Activated T-helper 1 cell treated with anti-CD3 and anti-CD28 coated beads, Interleukin-12 subunit alpha, Interleukin-12 subunit beta, Interleukin-2, Interleukin-4 antibody, amounts not matched to agents 30 ng/mL and 10 ng/mL and 1 ng/mL, durations not matched to agents 14 hours and 24 hours and 36 hours (primary cell): ENCODE measurements at regions of chr12 and their contacts with region 1.

Region 1: GRCh38 chr12:100554608-100555077 is 18.8 kb upstream of the GAS2L3 start:
- DNase-seq: no peak
- H3K4me3 Mint-ChIP-seq: no peak overlapping the region
- H3K27ac Mint-ChIP-seq: no peak overlapping the region
- H3K4me1 Mint-ChIP-seq: no peaks in the 10 kb centered on the region
- H3K27me3 Mint-ChIP-seq: peaks cover 5% of the 10 kb centered on the region

Region 2: DNA sequence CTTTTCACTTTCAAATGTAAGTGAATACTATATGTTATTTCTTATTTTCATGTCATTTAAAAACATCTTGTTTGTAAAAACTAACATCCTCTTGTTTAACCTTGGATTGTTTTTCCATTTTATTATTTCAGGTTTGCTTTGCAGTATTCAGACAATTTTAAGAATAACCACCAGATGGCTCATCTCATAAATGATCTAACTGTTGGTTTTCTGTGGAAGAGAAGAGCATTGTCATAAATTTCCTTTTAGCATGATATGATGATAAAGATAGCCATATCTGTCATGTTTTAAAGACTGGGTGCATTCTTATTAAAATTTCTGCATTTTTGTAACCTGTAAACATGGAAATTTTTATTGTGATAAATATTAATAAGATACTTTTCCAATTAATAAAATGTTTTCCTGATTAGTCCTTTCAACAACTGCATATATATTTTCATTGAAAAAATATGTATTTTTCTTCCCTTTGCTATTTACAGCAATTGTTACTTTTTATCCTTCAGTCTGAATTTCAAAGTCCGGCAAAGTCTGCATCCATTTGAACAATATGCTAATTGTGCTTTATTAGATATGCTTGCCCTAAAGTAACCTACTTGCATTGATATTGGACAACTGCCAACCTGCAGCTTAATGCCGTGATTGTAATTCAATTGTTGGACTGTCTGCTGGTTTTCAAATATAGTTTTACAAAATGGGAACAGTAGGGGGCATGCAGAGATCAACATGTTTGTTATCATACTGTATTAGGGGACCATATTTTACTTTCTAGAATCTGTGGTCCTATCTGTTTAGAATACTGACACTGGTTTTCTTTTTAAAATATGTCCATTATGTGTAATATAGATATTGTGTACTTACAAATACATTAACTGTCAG is 743.7 kb before region 1 on chr12:
- intact Hi-C with region 1: loop called (anchors 2 kb)
- DNase-seq: no peak
- H3K4me3 Mint-ChIP-seq: no peak overlapping the region
- H3K27ac Mint-ChIP-seq: no peak overlapping the region
- H3K4me1 Mint-ChIP-seq: no peaks in the 10 kb centered on the region
- H3K27me3 Mint-ChIP-seq: no peaks in the 10 kb centered on the region

Region 3: DNA sequence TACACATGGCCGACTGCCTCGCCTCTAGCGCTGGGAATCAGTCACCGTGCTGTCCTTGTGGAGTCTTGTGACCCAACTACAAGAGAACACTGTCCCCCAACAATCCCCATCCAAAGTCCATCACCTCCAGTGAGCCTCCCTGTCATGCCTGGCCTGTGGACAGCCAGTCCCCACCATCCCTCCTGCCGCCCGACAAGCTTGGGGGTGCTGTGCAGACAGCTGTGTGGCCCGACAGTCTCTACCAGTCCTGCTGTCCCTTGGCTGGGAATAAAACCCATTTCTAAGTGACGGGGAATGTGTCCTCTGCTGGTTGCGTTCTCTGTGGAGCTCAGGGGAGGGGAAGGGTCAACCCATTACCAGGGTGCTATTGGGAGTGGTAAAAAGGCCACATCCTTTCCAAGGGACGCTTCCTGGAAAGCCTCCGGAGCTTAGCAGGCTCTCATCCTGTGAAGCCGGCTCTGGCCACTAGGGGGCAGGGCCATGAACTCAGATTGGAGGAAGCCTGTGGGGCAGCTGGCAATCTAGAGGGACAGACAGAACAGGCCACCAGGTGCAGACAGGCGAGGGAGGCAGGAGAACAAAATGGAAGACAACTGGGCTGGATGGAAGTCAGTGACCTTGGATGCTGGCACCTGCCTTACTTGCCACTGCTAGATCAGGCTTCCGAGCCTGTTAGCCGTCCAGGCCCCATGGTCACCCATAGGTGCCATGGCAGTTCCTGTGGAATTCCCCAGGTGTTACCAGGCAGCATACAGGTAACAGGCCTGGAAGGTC is 400.0 kb before region 1 on chr12:
- intact Hi-C with region 1: loop called (anchors 1 kb)
- DNase-seq: peak; percentile 64
- H3K4me3 Mint-ChIP-seq: no peak overlapping the region
- H3K27ac Mint-ChIP-seq: no peak overlapping the region
- H3K4me1 Mint-ChIP-seq: peaks cover 10% of the 10 kb centered on the region
- H3K27me3 Mint-ChIP-seq: no peaks in the 10 kb centered on the region

Region 4: DNA sequence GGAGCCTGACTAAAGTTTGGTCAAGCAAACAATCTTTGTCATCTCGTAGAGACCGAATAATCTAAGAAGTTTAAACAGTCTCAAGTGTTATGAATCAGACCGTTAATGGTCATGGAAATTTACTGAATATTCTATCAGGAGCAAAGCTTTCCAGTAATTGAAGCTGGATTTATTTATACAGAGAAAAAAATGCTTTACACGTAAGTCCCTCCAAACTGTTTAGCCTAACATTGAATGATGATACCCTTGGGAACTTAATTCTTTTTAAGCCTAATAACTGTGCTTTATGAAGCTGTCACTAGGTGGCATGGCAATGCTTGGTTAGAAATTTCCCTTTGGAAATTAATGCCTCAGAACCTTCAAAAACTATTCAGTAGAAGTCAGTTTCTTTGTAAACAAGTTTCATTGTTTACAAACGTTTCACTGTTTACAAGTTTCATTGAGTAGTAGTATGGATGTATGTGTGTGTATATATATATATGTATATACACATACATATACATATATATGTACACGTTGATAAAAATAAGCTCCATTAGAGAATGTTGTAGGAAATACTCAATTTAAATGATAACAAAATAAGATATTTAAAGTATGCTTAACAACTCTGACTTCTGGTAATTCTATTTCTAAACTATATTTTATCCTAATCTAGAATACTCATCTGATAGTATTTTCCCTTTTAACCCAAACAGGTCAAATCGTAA is 319.9 kb before region 1 on chr12:
- intact Hi-C with region 1: loop called (anchors 1 kb)
- DNase-seq: no peak
- H3K4me3 Mint-ChIP-seq: no peak overlapping the region
- H3K27ac Mint-ChIP-seq: no peak overlapping the region
- H3K4me1 Mint-ChIP-seq: no peaks in the 10 kb centered on the region
- H3K27me3 Mint-ChIP-seq: peaks cover 2% of the 10 kb centered on the region

Region 5: DNA sequence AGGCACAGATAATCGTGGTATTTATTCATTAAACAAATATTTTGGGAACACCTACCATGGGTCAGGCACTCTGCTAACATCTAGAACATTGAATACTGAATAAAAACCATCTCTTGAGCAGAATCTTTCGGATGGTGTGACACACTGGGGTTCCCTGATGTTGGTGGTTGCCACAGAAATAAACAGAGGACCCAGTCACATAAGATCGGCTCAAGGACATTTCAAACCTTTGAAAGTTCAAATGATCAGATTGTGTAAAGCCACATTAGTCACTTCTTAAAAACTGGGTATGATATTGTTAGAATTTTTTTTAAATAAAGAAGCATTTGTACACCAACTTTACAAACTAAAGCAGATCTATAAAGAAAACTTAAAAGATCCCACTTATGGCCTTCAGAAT is 42.0 kb before region 1 on chr12:
- intact Hi-C with region 1: loop called (anchors 1 kb)
- DNase-seq: no peak
- H3K4me3 Mint-ChIP-seq: no peak overlapping the region
- H3K27ac Mint-ChIP-seq: no peak overlapping the region
- H3K4me1 Mint-ChIP-seq: no peaks in the 10 kb centered on the region
- H3K27me3 Mint-ChIP-seq: no peaks in the 10 kb centered on the region